Mammary epithelial cell (primary cell): ENCODE measurements at regions of chr1 and their contacts with region 1.

Region 1: DNA sequence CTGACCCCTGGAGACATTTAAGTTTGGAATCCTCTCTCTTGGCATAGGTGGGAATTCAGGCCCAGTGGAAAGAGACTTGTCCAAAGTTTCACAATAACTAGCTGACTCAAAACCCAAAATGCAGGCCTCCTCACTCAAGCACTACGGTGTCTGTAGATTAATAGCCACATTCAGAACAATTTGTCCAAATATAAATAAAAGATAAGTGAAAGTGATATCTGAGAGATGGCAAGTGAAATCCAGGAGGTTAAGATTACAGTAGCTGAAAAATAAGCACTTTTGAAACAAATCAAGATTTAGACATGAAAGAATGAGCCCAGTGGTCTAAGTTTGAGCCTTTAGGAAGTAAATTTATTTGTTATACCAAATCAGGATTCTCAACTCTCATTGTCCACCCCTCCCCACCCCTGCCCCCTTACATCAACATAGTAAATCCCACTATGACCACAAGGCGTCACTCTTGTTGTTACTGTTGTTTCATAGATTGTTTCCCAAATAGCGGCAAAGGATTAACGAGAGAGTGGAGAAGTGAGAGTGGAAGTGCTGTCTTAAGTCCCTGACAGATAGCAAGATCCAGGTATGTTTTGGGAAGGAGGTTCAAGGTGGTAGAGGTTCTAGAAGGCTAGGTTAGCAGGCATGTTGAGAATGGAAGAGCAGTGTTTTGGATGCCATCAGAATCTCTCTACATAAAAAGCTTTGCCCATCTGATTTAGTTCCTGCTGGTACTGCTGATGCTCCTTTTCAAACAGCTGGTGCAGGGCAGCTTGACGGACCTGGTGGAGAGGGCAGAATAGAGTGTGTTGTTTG is 7.1 kb upstream of the TPM3 start:
- DNase-seq: peak; percentile 48
- H3K4me3 ChIP-seq: no peak overlapping the region
- H3K27ac ChIP-seq: no peak overlapping the region
- H3K4me1 ChIP-seq: peaks cover 9% of the 10 kb centered on the region
- H3K27me3 ChIP-seq: no peaks in the 10 kb centered on the region
- CTCF ChIP-seq: peak; percentile 52 to 57

Region 2: DNA sequence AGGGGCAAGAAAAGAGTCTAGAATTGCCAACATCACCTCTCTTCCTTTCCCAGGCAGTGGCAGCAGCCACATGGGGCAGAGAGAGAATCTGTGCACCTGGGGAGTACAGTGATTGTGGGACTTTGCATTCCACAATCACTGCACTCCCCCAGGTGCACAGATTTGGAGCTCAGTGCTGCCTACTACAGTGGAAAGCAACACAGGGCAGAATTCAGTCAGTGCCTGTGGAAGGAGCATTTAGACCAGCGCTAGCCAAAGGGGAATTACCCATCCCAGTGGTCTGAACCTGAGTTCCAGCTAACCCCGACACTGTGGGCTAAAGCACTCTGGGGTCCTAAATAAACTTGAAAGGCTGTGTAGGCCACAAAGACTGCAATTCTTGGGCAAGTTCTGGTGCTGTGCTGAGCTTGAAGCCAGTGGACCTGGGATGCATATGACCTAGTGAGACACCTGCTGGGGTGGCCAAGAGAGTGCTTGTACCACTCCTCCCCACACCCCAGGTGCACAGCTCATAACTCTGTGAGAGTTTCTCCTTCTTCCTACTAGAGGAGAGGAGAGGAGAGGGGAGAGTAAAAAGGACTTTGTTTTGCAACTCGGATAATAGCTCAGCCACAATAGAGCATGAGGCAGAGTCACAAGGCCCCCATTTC is 94.4 kb before region 1 on chr1:
- CTCF ChIA-PET with region 1: no interaction called
- dilution Hi-C with region 1: no loop called
- in situ Hi-C with region 1: no loop called
- intact Hi-C with region 1: no loop called
- DNase-seq: no peak
- H3K4me3 ChIP-seq: no peak overlapping the region
- H3K27ac ChIP-seq: no peak overlapping the region
- H3K4me1 ChIP-seq: no peaks in the 10 kb centered on the region
- H3K27me3 ChIP-seq: no peaks in the 10 kb centered on the region
- CTCF ChIP-seq: peak in 1 of 2 donors; percentile 14

Region 3: GRCh38 chr1:154220071-154220969 is 21.4 kb after region 1 on chr1 and contains the start of gene UBAP2L:
- CTCF ChIA-PET with region 1: interaction called, 4 read pairs
- dilution Hi-C with region 1: no loop called
- in situ Hi-C with region 1: no loop called
- intact Hi-C with region 1: loop called (anchors 1 kb)
- DNase-seq: peak; percentile 100
- H3K4me3 ChIP-seq: peak within 1 kb of the TSS; percentile 94 to 98 (median 95)
- H3K27ac ChIP-seq: peak within 1 kb of the TSS; percentile 97
- H3K4me1 ChIP-seq: peaks cover 19% of the 10 kb centered on the region
- H3K27me3 ChIP-seq: no peaks in the 10 kb centered on the region
- CTCF ChIP-seq: no peak
- total RNA-seq, gene UBAP2L: 63.7 to 168 TPM

Region 4: GRCh38 chr1:154237435-154237834 is 38.5 kb after region 1 on chr1:
- CTCF ChIA-PET with region 1: no interaction called
- dilution Hi-C with region 1: no loop called
- in situ Hi-C with region 1: no loop called
- intact Hi-C with region 1: no loop called
- DNase-seq: no peak
- H3K4me3 ChIP-seq: no peak overlapping the region
- H3K27ac ChIP-seq: no peak overlapping the region
- H3K4me1 ChIP-seq: no peaks in the 10 kb centered on the region
- H3K27me3 ChIP-seq: no peaks in the 10 kb centered on the region
- CTCF ChIP-seq: no peak

Region 5: GRCh38 chr1:154256686-154257085 is 57.7 kb after region 1 on chr1:
- CTCF ChIA-PET with region 1: no interaction called
- dilution Hi-C with region 1: loop called (anchors 5 kb)
- in situ Hi-C with region 1: no loop called
- intact Hi-C with region 1: no loop called
- DNase-seq: no peak
- H3K4me3 ChIP-seq: no peak overlapping the region
- H3K27ac ChIP-seq: no peak overlapping the region
- H3K4me1 ChIP-seq: no peaks in the 10 kb centered on the region
- H3K27me3 ChIP-seq: no peaks in the 10 kb centered on the region
- CTCF ChIP-seq: no peak

Region 6: GRCh38 chr1:154335025-154335714 is 136.2 kb after region 1 on chr1:
- CTCF ChIA-PET with region 1: interaction called, 8 read pairs
- dilution Hi-C with region 1: no loop called
- in situ Hi-C with region 1: no loop called
- intact Hi-C with region 1: loop called (anchors 1 kb)
- DNase-seq: peak; percentile 54
- H3K4me3 ChIP-seq: no peak overlapping the region
- H3K27ac ChIP-seq: no peak overlapping the region
- H3K4me1 ChIP-seq: peaks cover 3% of the 10 kb centered on the region
- H3K27me3 ChIP-seq: no peaks in the 10 kb centered on the region
- CTCF ChIP-seq: peak; percentile 80 to 88